SK-N-SH (cell line): ENCODE measurements at regions of chr12 and their contacts with region 1.

Region 1: GRCh38 chr12:50314629-50315312 is 31.5 kb upstream of the LIMA1 start:
- DNase-seq: peak; percentile 73
- H3K4me3 ChIP-seq: no peak overlapping the region; a peak in 1 of 4 replicates
- H3K27ac ChIP-seq: no peak overlapping the region
- H3K4me1 ChIP-seq: no peaks in the 10 kb centered on the region
- H3K27me3 ChIP-seq: no peaks in the 10 kb centered on the region
- CTCF ChIP-seq: peak; percentile 87
- EP300 ChIP-seq: no peak
- RAD21 ChIP-seq: peak; percentile 93

Region 2: GRCh38 chr12:50132505-50133135 is 182.2 kb before region 1 on chr12:
- CTCF ChIA-PET with region 1: interaction called, 19 read pairs
- POLR2A ChIA-PET with region 1: no interaction called
- DNase-seq: peak; percentile 38
- H3K4me3 ChIP-seq: no peak overlapping the region; a peak in 1 of 4 replicates
- H3K27ac ChIP-seq: 0 out of 4 replicates have a peak overlapping the region, but pooled peaks of 1 of the 2 experiments have one; percentile 19
- H3K4me1 ChIP-seq: peaks cover 3 to 10% of the 10 kb centered on the region in 2 experiments; a peak in 3 of 4 replicates
- H3K27me3 ChIP-seq: no peaks in the 10 kb centered on the region
- CTCF ChIP-seq: peak; percentile 80
- EP300 ChIP-seq: no peak
- RAD21 ChIP-seq: peak; percentile 70

Region 3: DNA sequence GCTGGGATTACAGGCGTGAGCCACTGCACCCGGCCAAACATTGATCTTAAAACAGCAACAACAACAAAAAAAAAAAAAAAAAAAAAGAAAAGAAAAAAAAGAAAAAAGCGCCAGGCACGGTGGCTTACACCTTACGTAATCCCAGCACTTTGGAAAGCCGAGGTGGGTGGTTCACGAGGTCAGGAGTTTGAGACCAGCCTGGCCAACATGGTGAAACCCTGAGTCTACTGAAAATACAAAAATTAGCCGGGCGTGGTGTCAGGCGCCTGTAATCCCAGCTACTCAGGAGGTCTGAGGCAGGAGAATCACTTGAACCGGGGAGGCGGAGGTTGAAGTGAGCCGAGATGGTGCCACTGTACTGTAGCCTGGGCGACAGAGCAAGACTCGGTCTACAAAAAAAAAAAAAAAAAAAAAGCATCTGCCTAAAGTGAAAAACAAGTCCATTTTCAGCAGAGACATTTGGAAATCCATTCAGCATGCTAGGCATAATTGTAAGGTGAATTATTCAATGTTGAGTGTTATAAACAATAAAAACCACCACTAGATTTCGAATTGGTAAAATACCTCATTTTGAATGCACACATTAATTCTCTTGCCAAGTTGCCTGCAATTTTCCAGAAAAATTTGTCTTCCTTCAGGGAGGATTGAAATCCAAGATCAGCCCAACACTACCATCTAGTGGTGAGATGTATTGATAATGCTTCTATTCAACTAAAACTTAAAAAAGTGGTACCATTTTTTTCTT is 139.6 kb before region 1 on chr12:
- CTCF ChIA-PET with region 1: interaction called, 24 read pairs
- POLR2A ChIA-PET with region 1: no interaction called
- DNase-seq: peak; percentile 64
- H3K4me3 ChIP-seq: no peak overlapping the region
- H3K27ac ChIP-seq: peak overlapping the region in 1 of 2 experiments; percentile 41; a peak in 1 of 4 replicates
- H3K4me1 ChIP-seq: no peaks in the 10 kb centered on the region
- H3K27me3 ChIP-seq: no peaks in the 10 kb centered on the region
- CTCF ChIP-seq: peak; percentile 74
- EP300 ChIP-seq: no peak
- RAD21 ChIP-seq: peak; percentile 86

Region 4: DNA sequence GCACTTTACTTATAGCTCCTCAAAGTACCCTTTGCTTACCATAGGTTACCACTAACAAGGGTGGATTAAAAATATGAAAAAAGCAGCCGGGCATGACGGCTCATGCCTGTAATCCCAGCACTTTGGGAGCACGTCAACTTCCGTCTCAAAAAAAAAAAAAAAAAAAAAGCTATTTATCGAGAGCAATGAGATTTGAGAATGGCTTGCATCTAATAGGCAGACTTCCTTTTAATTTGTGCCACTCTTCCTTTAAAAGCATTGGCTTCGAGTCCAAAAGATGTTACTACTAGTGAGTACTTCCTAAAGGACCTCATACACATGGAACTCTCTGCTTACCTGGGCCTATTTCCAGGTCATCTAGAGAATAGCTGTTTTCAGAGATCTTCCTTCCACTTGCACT is 109.1 kb before region 1 on chr12:
- CTCF ChIA-PET with region 1: interaction called, 11 read pairs
- POLR2A ChIA-PET with region 1: no interaction called
- DNase-seq: no peak
- H3K4me3 ChIP-seq: no peak overlapping the region
- H3K27ac ChIP-seq: no peak overlapping the region
- H3K4me1 ChIP-seq: peaks cover 0 to 26% of the 10 kb centered on the region in 2 experiments
- H3K27me3 ChIP-seq: no peaks in the 10 kb centered on the region
- CTCF ChIP-seq: no peak
- EP300 ChIP-seq: no peak
- RAD21 ChIP-seq: no peak

Region 5: GRCh38 chr12:50302686-50303085 is 12.1 kb before region 1 on chr12:
- CTCF ChIA-PET with region 1: interaction called, 11 read pairs
- POLR2A ChIA-PET with region 1: no interaction called
- DNase-seq: no peak
- H3K4me3 ChIP-seq: no peak overlapping the region
- H3K27ac ChIP-seq: no peak overlapping the region
- H3K4me1 ChIP-seq: no peaks in the 10 kb centered on the region
- H3K27me3 ChIP-seq: no peaks in the 10 kb centered on the region
- CTCF ChIP-seq: no peak
- EP300 ChIP-seq: no peak
- RAD21 ChIP-seq: no peak